ENCODE measurements at regions of chr1 and their contacts with region 1.

Region 1: GRCh38 chr1:200217709-200218108 is 190.2 kb downstream of the NR5A2 start:
- DNase-seq: no peak
- H3K4me3 ChIP-seq: no peak overlapping the region
- H3K27ac ChIP-seq: no peak overlapping the region
- H3K4me1 ChIP-seq: no peaks in the 10 kb centered on the region
- H3K27me3 ChIP-seq: no peaks in the 10 kb centered on the region
- CTCF ChIP-seq: no peak

Region 2: GRCh38 chr1:200107004-200107470 is 110.7 kb before region 1 on chr1:
- CTCF ChIA-PET with region 1: interaction called, 11 read pairs
- POLR2A ChIA-PET with region 1: no interaction called
- intact Hi-C with region 1: no loop called
- DNase-seq: peak in 1 of 2 experiments; percentile 41
- H3K4me3 ChIP-seq: no peak overlapping the region
- H3K27ac ChIP-seq: no peak overlapping the region
- H3K4me1 ChIP-seq: peaks cover 10% of the 10 kb centered on the region; the same call in 1 of the 2 replicates
- H3K27me3 ChIP-seq: no peaks in the 10 kb centered on the region
- CTCF ChIP-seq: no peak

Region 3: DNA sequence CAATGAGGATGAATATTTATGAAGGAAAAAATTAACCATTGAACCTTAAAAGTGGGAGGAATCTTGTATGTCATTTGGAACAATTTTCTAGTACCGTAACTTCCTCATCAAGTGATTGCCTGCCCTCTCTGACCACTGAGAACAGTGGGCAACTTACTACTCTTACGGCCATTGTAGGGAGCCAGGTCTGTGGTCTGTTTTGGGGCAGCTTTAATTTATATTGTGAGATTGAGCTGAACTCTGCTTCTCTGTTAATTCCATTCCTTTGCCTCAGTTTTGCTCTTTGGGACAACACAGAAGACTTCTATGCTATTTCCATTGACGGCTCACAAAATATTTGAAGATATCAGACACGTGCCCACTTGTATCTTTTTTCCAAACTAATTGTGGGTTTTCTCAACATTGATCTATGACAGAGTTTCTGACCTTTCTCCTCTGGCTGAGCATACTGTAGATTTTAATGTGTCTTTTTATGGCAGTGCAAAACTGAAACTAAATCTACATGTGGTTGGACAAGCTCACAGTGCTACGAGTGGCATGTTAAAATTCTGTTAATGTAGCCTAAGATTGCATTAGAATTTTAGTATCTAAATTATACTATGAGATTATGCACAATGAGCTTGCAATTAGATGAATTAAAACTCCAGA is 220.0 kb after region 1 on chr1:
- CTCF ChIA-PET with region 1: no interaction called
- POLR2A ChIA-PET with region 1: no interaction called
- intact Hi-C with region 1: no loop called
- DNase-seq: no peak
- H3K4me3 ChIP-seq: no peak overlapping the region
- H3K27ac ChIP-seq: no peak overlapping the region
- H3K4me1 ChIP-seq: peaks cover 3% of the 10 kb centered on the region; the same call in 1 of the 2 replicates
- H3K27me3 ChIP-seq: no peaks in the 10 kb centered on the region
- CTCF ChIP-seq: no peak

Measured in PC-9 (cell line).